Right cardiac atrium (tissue), 5 donors: ENCODE measurements at regions of chr3 and their contacts with region 1.

Region 1: DNA sequence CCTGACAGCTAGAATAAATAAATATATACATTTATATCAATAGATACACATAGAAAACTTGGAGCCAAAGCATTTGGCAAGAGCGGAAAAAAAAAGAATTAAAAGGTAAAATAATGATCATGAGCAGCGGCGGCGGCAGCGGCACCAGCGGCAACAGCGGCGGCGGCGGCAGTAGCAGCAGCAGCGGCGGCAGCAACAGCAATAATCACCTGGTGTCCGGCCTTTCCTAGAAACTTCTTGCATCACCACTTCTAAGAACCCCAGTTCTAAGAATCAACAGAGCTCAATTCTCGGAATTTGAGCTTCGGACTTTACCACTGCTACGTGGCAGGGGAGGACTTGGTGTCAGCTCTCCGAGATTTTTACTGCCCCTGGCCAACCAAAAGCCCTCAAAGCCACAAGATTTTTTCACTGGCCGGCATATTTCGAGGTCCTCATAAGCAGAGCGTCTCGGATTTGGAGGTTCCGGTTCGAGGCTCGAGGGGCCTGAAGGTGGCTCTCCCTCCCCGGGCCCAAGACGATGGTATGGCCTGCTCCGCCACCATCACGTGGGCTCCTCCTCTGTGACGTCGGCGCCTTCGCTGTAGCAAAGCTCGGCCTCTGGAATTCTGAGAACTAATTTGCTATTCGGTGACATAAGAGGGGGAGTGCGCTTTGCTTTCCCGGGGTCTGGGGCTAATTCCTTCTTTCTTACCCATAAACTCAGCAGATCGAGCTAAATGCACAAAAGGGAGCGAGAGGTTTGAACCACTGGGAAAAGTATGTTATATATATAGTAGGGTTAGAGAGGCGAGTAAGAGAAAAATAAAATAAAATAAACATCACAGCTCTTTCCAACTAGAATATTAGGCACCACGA is at the start of gene BCL6:
- DNase-seq: peak; percentile 93 to 96 (median 95)
- ATAC-seq: peak; percentile 79 to 84
- H3K4me3 ChIP-seq: peak within 1 kb of the TSS; percentile 88
- H3K27ac ChIP-seq: peak within 1 kb of the TSS; percentile 100
- H3K4me1 ChIP-seq: no peaks in the 10 kb centered on the region
- H3K27me3 ChIP-seq: no peaks in the 10 kb centered on the region
- total RNA-seq, gene BCL6: 70.0 to 77.3 (median 71.4) TPM

Region 2: DNA sequence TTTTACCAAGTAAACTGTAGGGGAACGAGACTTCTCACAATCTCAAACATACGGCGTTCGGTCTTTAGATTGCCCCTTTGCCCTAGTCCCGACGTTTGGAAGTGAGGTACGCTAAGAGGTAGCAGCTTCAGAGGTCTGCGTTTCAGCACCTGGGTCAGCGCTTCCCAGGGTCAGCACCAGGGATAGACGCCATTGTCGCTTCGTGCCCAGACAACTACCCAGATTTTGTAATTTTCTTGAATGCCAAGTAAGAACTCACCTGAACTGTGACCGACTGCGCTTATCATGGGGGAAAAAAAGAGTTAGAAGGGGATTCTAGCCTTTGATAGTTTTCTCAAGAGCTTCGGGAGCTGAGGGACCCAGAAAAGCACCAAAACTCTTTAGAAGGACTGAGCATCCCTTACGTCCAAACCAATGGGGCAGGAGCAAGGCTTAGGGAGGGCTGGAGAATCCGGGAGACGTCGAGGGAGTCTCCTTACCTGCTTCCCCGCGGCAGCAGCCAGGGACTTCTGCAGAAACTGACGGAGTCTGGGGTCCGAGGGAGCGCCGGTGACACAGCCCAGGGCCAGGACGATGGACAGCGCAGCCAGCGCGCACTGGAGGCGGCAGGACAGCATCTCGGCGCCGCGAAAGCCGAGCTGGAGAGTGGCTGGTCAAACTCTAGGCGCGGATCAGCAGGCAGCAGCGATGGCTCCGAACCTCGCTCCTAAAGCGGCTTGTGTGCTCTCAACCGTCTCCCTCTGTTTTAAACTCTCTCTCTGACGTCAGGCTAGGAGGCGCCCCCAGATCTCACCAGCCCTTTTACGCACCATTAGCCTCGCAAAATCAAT is 75.5 kb before region 1 on chr3 and contains the start of gene SST:
- intact Hi-C with region 1: no loop called
- DNase-seq: peak; percentile 45 to 80 (median 75)
- ATAC-seq: peak; percentile 60 to 71
- H3K4me3 ChIP-seq: no peak within 1 kb of the TSS
- H3K27ac ChIP-seq: no peak within 1 kb of the TSS
- H3K4me1 ChIP-seq: no peaks in the 10 kb centered on the region
- H3K27me3 ChIP-seq: peaks cover 7% of the 10 kb centered on the region
- total RNA-seq, gene SST: 0.84 TPM in 1 of 4 donors, not detected in the others

Region 3: DNA sequence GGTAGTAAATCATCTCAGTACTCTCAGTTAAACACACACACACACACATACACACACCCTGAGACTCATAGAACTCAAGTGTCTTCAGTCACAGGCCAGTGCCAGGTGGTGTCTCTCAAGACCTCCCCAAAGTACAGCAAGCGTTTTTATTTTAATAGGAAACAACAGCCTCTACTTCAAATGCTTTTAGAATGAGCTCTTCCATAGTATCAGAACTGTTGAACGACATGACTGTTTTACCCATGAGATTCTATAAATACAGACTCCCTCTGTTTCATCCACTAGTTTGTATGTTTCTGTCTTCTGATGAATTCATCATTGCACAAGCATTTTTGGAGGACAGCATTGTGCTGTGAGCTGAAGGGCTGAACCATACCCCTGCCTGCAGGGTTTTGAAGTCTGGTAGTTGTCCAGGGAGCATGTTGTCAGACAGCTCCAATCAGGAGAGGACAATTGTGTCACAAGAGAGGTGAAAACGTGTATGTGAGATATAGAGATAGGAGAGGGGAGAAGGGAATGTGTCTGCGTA is 200.8 kb after region 1 on chr3:
- intact Hi-C with region 1: loop called in 1 of 4 experiments (anchors 5 kb)
- DNase-seq: no peak
- ATAC-seq: peak; percentile 30 to 54
- H3K4me3 ChIP-seq: no peak overlapping the region
- H3K27ac ChIP-seq: peak overlapping the region; percentile 86
- H3K4me1 ChIP-seq: no peaks in the 10 kb centered on the region
- H3K27me3 ChIP-seq: no peaks in the 10 kb centered on the region

Region 4: GRCh38 chr3:188037216-188037718 is 291.8 kb after region 1 on chr3:
- intact Hi-C with region 1: loop called in 1 of 4 experiments (anchors 10 kb)
- DNase-seq: peak in 1 of 3 donors; percentile 60
- ATAC-seq: peak; percentile 57 to 84
- H3K4me3 ChIP-seq: no peak overlapping the region
- H3K27ac ChIP-seq: no peak overlapping the region
- H3K4me1 ChIP-seq: peaks cover 2% of the 10 kb centered on the region
- H3K27me3 ChIP-seq: no peaks in the 10 kb centered on the region

Region 5: GRCh38 chr3:188154014-188154808 is 408.8 kb after region 1 on chr3 and contains the start of gene LPP:
- intact Hi-C with region 1: loop called in 3 of 4 experiments (anchors 2 to 5 kb)
- DNase-seq: peak; percentile 80 to 93 (median 92)
- ATAC-seq: peak; percentile 93
- H3K4me3 ChIP-seq: peak within 1 kb of the TSS; percentile 82
- H3K27ac ChIP-seq: peak within 1 kb of the TSS; percentile 80
- H3K4me1 ChIP-seq: peaks cover 23% of the 10 kb centered on the region
- H3K27me3 ChIP-seq: no peaks in the 10 kb centered on the region
- total RNA-seq, gene LPP: 141 to 205 (median 171) TPM

Region 6: DNA sequence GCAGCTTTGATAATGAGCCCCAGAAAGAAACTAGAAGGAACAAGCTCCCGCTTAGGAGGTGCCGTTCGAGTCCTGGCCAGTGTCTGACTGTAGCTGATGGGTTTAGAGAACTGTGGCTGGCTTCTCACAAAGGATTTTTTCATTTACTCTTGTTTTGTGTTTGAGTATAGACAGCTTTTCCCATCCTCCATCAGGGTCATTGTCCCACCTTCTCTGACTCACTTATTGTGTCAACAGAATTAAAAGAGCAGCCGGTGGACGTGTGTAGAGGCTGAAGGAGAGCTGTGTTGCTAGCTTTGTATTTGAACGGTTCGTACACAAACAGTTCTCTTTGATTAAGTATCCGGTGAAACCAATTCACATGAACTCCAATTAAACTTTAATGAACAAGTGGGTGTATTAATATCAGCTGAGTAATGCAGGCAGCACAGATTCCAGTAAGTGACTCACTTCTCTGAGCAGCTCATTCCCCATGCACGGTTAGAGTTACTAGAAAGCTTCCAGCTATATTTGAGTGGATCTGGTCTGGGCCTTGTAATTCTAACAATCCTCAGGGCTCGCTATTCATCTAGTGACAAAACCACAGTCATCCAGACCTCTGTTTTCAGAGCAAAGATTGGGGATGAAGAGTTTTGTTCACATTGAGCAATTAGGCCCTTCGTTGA is 549.5 kb after region 1 on chr3:
- intact Hi-C with region 1: loop called in 1 of 4 experiments (anchors 10 kb)
- DNase-seq: no peak
- ATAC-seq: peak; percentile 80 to 86
- H3K4me3 ChIP-seq: no peak overlapping the region
- H3K27ac ChIP-seq: peak overlapping the region; percentile 99
- H3K4me1 ChIP-seq: peaks cover 10% of the 10 kb centered on the region
- H3K27me3 ChIP-seq: no peaks in the 10 kb centered on the region

Region 7: GRCh38 chr3:189148081-189148507 is 1402.7 kb after region 1 on chr3:
- intact Hi-C with region 1: loop called in 3 of 4 experiments (anchors 5 to 10 kb)
- DNase-seq: peak; percentile 46 to 78 (median 69)
- ATAC-seq: peak; percentile 50 to 73
- H3K4me3 ChIP-seq: no peak overlapping the region
- H3K27ac ChIP-seq: no peak overlapping the region
- H3K4me1 ChIP-seq: no peaks in the 10 kb centered on the region
- H3K27me3 ChIP-seq: no peaks in the 10 kb centered on the region